Spleen (tissue), 13 donors: ENCODE measurements at regions of chr12 and their contacts with region 1.

Region 1: DNA sequence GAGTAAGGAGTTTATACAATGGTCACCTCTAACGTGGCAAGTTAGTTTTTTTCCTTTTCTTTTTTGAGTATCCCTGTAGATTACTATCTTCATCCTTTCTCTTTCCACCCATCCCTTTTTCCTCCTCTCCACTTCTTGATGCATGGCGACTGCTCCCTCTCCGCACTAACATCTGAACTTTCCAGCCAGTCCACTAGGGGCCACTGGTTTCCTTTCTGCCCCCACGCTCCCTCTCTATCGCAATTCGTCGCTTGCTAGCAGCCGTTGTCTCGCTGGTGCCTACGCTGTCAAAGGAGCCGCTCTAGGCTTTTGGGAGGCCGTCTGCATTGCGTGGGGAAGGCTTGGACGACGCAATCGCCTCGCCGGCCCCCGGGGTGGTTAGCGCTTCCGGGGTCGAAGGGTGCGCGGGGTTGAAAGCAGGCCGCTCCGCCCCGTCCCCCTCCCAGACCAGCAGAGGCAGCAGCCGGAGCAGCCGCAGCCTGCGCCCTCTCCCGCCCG is at the start of gene PCBP2:
- DNase-seq: peak; percentile 100
- H3K4me3 ChIP-seq: peak within 1 kb of the TSS; percentile 59 to 83 (median 69)
- H3K27ac ChIP-seq: peak within 1 kb of the TSS; percentile 84 to 97 (median 97)
- H3K4me1 ChIP-seq: peaks cover 25 to 61% (median 36%) of the 10 kb centered on the region in 6 donors
- H3K27me3 ChIP-seq: no peaks in the 10 kb centered on the region
- CTCF ChIP-seq: peak; percentile 87 to 99 (median 95)
- POLR2A ChIP-seq: peak in 2 of 3 donors; percentile 47 to 64
- total RNA-seq, gene PCBP2: 547 to 779 (median 652) TPM

Region 2: GRCh38 chr12:53500776-53501614 is 49.3 kb after region 1 on chr12 and contains the start of gene TARBP2:
- intact Hi-C with region 1: loop called (anchors 10 kb)
- DNase-seq: peak; percentile 99
- H3K4me3 ChIP-seq: peak within 1 kb of the TSS; percentile 55 to 87 (median 66)
- H3K27ac ChIP-seq: peak within 1 kb of the TSS; percentile 92 to 100 (median 96)
- H3K4me1 ChIP-seq: peaks cover 7 to 69% (median 47%) of the 10 kb centered on the region in 6 donors
- H3K27me3 ChIP-seq: no peaks in the 10 kb centered on the region
- CTCF ChIP-seq: peak in 6 of 11 experiments; percentile 6 to 45 (median 21)
- POLR2A ChIP-seq: peak in 2 of 3 donors; percentile 7 to 69
- total RNA-seq, gene TARBP2: 25.9 to 43.7 (median 31.8) TPM

Region 3: GRCh38 chr12:54040148-54040494 is 588.4 kb after region 1 on chr12:
- intact Hi-C with region 1: no loop called
- DNase-seq: no peak
- H3K4me3 ChIP-seq: no peak overlapping the region
- H3K27ac ChIP-seq: no peak overlapping the region
- H3K4me1 ChIP-seq: no peaks in the 10 kb centered on the region
- H3K27me3 ChIP-seq: peaks cover 0 to 100% (median 60%) of the 10 kb centered on the region in 7 donors
- CTCF ChIP-seq: no peak
- POLR2A ChIP-seq: no peak